ENCODE measurements at regions of chr2 and their contacts with region 1.

Region 1: DNA sequence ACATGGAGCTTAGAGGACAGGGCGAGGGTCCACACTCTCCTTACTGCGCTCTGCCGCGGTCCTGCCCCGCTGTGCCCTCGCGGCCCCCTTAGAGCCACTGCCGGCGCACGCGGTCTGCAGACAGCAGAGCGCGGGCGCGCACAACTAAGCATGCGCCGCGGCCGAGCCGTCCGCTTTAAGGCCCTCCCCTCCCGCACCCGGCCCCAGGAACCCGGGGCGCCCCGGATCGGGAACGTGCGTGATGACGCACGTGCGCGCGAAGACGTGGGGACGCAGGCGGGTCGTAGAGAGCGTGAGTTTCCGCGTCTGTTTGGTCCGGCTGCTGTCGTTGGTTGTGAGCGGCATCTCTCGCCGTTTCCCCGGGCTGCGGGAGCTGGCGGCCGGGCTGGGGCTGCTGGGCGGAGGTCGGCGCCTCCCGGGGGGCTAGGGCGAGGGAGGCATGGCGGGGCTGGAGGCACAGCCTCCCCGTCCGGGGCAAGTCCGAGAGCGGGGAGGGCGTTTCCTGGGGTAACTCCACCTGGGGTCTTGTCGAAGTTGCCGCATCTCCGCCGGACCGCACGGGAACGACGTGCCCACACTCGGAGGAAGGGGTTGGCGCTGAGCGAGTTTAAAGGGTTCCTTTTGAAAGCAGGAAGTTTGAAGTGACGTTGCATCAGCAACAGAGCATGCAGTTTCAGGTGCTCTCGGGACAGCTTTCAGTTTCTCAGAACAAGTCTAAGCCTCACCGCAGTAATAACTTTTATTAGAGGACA is at the start of gene RHBDD1:
- DNase-seq: peak; percentile 86
- ATAC-seq: peak; percentile 88
- H3K4me3 ChIP-seq: peak within 1 kb of the TSS; percentile 79
- H3K27ac ChIP-seq: peak within 1 kb of the TSS; percentile 97
- H3K4me1 ChIP-seq: peaks cover 6% of the 10 kb centered on the region; the same call in 1 of the 2 replicates
- H3K27me3 ChIP-seq: no peaks in the 10 kb centered on the region
- CTCF ChIP-seq: no peak
- EP300 ChIP-seq: peak; percentile 36 to 49
- POLR2A ChIP-seq: peak; percentile 98
- RAD21 ChIP-seq: 0 out of 2 replicates have a peak, but pooled peaks have one; percentile 7
- polyA plus RNA-seq, gene RHBDD1: 7.1 to 7.3 TPM

Region 2: DNA sequence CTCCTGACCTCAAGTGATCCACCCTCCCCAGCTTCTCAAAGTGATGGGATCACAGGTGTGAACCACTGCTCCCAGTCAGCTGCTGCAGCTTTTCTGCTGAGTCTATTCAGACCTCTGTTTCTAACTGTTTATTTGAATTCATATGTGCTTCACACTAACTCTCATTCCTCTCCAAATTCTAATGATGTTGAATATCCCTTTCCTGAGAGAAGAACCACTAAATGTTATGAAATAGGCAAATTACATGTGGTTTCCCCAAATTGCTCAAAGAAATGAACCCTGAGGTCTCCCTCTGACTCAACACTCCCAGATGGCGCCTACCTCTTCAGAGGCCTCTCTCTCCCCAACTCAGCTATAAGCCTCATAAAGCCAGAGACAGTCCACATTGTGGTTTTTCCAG is 134.9 kb before region 1 on chr2:
- CTCF ChIA-PET with region 1: no interaction called
- POLR2A ChIA-PET with region 1: no interaction called
- RAD21 ChIA-PET with region 1: no interaction called
- SMC1A ChIA-PET with region 1: no interaction called
- in situ Hi-C with region 1: no loop called
- intact Hi-C with region 1: no loop called
- DNase-seq: no peak
- ATAC-seq: no peak
- H3K4me3 ChIP-seq: no peak overlapping the region
- H3K27ac ChIP-seq: no peak overlapping the region
- H3K4me1 ChIP-seq: no peaks in the 10 kb centered on the region
- H3K27me3 ChIP-seq: no peaks in the 10 kb centered on the region
- CTCF ChIP-seq: no peak
- EP300 ChIP-seq: no peak
- POLR2A ChIP-seq: no peak
- RAD21 ChIP-seq: no peak

Region 3: GRCh38 chr2:226855766-226856165 is 19.8 kb after region 1 on chr2:
- CTCF ChIA-PET with region 1: no interaction called
- POLR2A ChIA-PET with region 1: interaction called, 3 read pairs
- RAD21 ChIA-PET with region 1: interaction called, 3 read pairs
- SMC1A ChIA-PET with region 1: interaction called, 27 read pairs
- in situ Hi-C with region 1: no loop called
- intact Hi-C with region 1: no loop called
- DNase-seq: no peak
- ATAC-seq: no peak
- H3K4me3 ChIP-seq: no peak overlapping the region
- H3K27ac ChIP-seq: no peak overlapping the region
- H3K4me1 ChIP-seq: no peaks in the 10 kb centered on the region
- H3K27me3 ChIP-seq: no peaks in the 10 kb centered on the region
- CTCF ChIP-seq: no peak
- EP300 ChIP-seq: no peak
- POLR2A ChIP-seq: no peak
- RAD21 ChIP-seq: no peak

Region 4: GRCh38 chr2:226862623-226863022 is 26.7 kb after region 1 on chr2:
- CTCF ChIA-PET with region 1: interaction called, 6 read pairs
- POLR2A ChIA-PET with region 1: interaction called, 18 read pairs
- RAD21 ChIA-PET with region 1: interaction called, 13 read pairs
- SMC1A ChIA-PET with region 1: interaction called, 19 read pairs
- in situ Hi-C with region 1: no loop called
- intact Hi-C with region 1: loop called (anchors 2 kb)
- DNase-seq: peak; percentile 51
- ATAC-seq: peak; percentile 88
- H3K4me3 ChIP-seq: no peak overlapping the region; the same call in 1 of the 2 replicates
- H3K27ac ChIP-seq: peak overlapping the region; percentile 54
- H3K4me1 ChIP-seq: peaks cover 23% of the 10 kb centered on the region
- H3K27me3 ChIP-seq: no peaks in the 10 kb centered on the region
- CTCF ChIP-seq: no peak
- EP300 ChIP-seq: no peak
- POLR2A ChIP-seq: no peak
- RAD21 ChIP-seq: peak; percentile 20; the same call in 1 of the 2 replicates

Region 5: GRCh38 chr2:226906163-226906693 is 70.3 kb after region 1 on chr2:
- CTCF ChIA-PET with region 1: interaction called, 4 read pairs
- POLR2A ChIA-PET with region 1: interaction called, 3 read pairs
- RAD21 ChIA-PET with region 1: interaction called, 5 read pairs
- SMC1A ChIA-PET with region 1: interaction called, 8 read pairs
- in situ Hi-C with region 1: no loop called
- intact Hi-C with region 1: loop called (anchors 2 kb)
- DNase-seq: peak; percentile 82
- ATAC-seq: peak; percentile 91
- H3K4me3 ChIP-seq: peak overlapping the region; percentile 53
- H3K27ac ChIP-seq: peak overlapping the region; percentile 84
- H3K4me1 ChIP-seq: peaks cover 48% of the 10 kb centered on the region
- H3K27me3 ChIP-seq: no peaks in the 10 kb centered on the region
- CTCF ChIP-seq: no peak
- EP300 ChIP-seq: 0 out of 4 replicates have a peak, but pooled peaks of 1 of the 2 experiments have one; percentile 25
- POLR2A ChIP-seq: no peak
- RAD21 ChIP-seq: no peak

Region 6: GRCh38 chr2:226971084-226971483 is 135.1 kb after region 1 on chr2:
- CTCF ChIA-PET with region 1: interaction called, 4 read pairs
- POLR2A ChIA-PET with region 1: interaction called, 4 read pairs
- RAD21 ChIA-PET with region 1: interaction called, 4 read pairs
- SMC1A ChIA-PET with region 1: interaction called, 3 read pairs
- in situ Hi-C with region 1: loop called (anchors 5 kb)
- intact Hi-C with region 1: loop called (anchors 2 kb)
- DNase-seq: no peak
- ATAC-seq: peak; percentile 75
- H3K4me3 ChIP-seq: peak overlapping the region; percentile 56; the same call in 1 of the 2 replicates
- H3K27ac ChIP-seq: peak overlapping the region; percentile 75
- H3K4me1 ChIP-seq: peaks cover 5% of the 10 kb centered on the region; the same call in 1 of the 2 replicates
- H3K27me3 ChIP-seq: no peaks in the 10 kb centered on the region
- CTCF ChIP-seq: no peak
- EP300 ChIP-seq: no peak
- POLR2A ChIP-seq: no peak
- RAD21 ChIP-seq: no peak